Activated CD8-positive, alpha-beta T cell treated with anti-CD3 and anti-CD28 coated beads for 36 hours (primary cell): ENCODE measurements at regions of chr4 and their contacts with region 1.

Region 1: GRCh38 chr4:122577808-122578781 is 42.8 kb downstream of the IL21 start:
- DNase-seq: peak; percentile 84
- ATAC-seq: peak; percentile 69
- H3K4me3 Mint-ChIP-seq: peak overlapping the region; percentile 70
- H3K27ac Mint-ChIP-seq: peak overlapping the region; percentile 91
- H3K4me1 Mint-ChIP-seq: peaks cover 33% of the 10 kb centered on the region
- H3K27me3 Mint-ChIP-seq: peaks cover 6% of the 10 kb centered on the region
- CTCF ChIP-seq: peak; percentile 72

Region 2: DNA sequence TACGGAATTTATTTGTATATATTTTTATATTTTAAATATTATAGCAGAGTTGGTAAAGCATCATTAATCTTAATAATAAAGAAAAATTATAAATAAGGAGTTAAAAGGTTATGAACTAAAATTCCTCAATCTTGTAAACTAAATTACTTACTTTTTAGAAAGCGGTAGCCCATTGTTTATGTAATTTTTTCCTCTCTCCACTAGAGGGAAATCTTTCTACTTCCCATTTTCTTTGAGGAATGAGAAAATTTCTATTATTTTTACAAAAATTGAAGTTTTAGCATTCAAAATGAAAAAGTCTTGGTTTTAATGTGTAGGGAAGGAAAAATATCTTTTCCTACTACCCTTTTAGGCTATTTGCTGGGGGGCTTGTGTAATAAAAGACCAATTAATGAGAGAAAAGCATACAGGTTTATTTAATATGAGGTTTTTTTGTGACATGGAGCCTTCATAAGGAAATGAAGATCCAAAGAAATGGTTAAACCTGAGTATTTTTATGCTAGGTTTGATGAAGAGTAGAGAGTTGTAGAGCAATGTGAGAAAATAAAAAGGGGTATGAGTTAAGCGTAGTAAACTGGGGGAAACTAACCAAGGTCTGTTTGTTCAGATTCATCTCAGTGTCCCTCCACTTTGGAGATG is 268.0 kb before region 1 on chr4:
- CTCF ChIA-PET with region 1: interaction called, 14 read pairs
- POLR2A ChIA-PET with region 1: no interaction called
- intact Hi-C with region 1: loop called (anchors 5 kb)
- DNase-seq: no peak
- ATAC-seq: no peak
- H3K4me3 Mint-ChIP-seq: no peak overlapping the region
- H3K27ac Mint-ChIP-seq: no peak overlapping the region
- H3K4me1 Mint-ChIP-seq: no peaks in the 10 kb centered on the region
- H3K27me3 Mint-ChIP-seq: no peaks in the 10 kb centered on the region
- CTCF ChIP-seq: peak; percentile 65

Region 3: GRCh38 chr4:122458625-122459024 is 119.5 kb before region 1 on chr4:
- CTCF ChIA-PET with region 1: interaction called, 20 read pairs
- POLR2A ChIA-PET with region 1: no interaction called
- intact Hi-C with region 1: loop called (anchors 2 kb)
- DNase-seq: peak; percentile 70
- ATAC-seq: peak; percentile 85
- H3K4me3 Mint-ChIP-seq: peak overlapping the region; percentile 69
- H3K27ac Mint-ChIP-seq: peak overlapping the region; percentile 85
- H3K4me1 Mint-ChIP-seq: peaks cover 48% of the 10 kb centered on the region
- H3K27me3 Mint-ChIP-seq: no peaks in the 10 kb centered on the region
- CTCF ChIP-seq: no peak

Region 4: DNA sequence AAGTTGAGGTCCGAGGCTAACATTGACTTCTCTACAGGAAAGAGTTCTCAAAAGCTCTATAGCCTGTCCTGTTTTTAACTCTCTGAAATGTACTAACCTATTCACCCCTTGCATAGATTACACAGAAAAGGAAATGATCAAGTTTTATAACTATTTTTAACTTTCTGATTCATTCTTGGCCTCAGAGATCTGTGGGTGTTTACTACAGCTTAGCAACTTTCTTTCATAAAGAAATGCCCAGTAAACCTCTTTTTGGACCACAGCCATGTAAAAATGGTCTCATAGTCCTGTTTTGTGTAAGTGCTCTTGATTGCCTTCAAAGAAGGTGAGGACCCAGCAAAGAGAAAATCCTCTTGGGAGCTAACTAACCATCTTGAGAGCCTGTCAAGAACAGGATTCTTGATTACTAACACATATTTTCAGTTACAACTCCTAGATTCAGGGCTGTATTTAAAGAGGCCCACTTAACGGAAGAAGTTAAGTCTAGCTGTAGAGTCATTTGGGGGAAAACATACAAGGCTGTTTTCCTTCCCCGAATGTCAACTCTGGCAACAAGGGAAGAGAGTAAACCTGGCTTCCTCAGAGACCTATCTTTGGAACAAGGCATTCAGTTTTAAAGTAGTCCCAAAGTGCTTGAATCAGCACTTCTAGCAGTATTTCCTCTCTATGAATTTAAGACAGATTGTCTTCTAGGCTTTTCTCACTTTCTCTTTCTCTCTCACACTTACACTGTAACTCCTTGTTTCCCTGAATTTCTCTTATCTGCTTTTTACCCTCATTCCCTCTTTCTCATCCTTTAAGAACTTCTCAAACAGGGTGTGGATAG is 35.5 kb before region 1 on chr4:
- CTCF ChIA-PET with region 1: interaction called, 14 read pairs
- POLR2A ChIA-PET with region 1: interaction called, 4 read pairs
- intact Hi-C with region 1: loop called (anchors 5 kb)
- DNase-seq: no peak
- ATAC-seq: peak; percentile 67
- H3K4me3 Mint-ChIP-seq: peak overlapping the region; percentile 40
- H3K27ac Mint-ChIP-seq: peak overlapping the region; percentile 93
- H3K4me1 Mint-ChIP-seq: peaks cover 64% of the 10 kb centered on the region
- H3K27me3 Mint-ChIP-seq: no peaks in the 10 kb centered on the region
- CTCF ChIP-seq: no peak

Region 5: DNA sequence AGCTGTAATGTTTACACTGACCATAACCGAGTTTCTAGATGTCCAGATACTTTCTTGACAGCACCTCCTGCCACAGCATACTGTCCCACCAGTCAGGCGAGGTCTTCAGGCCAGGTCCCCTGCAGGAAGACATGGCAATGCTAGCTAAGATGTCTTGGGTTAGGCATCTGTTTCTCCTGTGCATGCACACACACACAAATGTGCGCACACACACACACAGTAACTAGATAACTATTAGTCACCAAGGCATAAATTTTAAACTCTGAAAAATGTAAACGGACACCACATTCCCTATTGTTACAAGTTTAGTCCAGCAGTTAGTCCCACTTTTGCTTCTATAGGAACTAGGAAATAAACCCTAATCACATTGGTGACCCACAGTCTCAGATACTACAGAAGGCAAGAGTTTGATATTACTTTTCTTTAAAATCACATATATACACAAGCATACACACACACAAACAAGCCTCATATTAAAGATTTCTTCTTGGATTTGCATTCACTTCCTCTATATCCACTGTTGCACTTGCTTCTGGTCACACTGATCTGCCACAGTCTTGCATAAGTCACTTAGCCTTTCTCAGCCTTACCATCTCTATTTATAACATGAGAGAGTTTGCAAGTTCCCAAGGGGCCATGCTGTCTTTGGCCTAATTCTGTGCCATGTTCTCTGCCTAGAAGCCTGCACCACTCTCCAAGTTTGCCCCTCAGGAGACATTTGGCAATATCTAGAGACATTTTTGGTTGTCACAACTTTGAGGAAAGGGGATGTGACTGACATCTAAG is 10.6 kb after region 1 on chr4:
- CTCF ChIA-PET with region 1: interaction called, 14 read pairs
- POLR2A ChIA-PET with region 1: no interaction called
- intact Hi-C with region 1: no loop called
- DNase-seq: no peak
- ATAC-seq: no peak
- H3K4me3 Mint-ChIP-seq: no peak overlapping the region
- H3K27ac Mint-ChIP-seq: no peak overlapping the region
- H3K4me1 Mint-ChIP-seq: peaks cover 20% of the 10 kb centered on the region
- H3K27me3 Mint-ChIP-seq: no peaks in the 10 kb centered on the region
- CTCF ChIP-seq: no peak

Region 6: DNA sequence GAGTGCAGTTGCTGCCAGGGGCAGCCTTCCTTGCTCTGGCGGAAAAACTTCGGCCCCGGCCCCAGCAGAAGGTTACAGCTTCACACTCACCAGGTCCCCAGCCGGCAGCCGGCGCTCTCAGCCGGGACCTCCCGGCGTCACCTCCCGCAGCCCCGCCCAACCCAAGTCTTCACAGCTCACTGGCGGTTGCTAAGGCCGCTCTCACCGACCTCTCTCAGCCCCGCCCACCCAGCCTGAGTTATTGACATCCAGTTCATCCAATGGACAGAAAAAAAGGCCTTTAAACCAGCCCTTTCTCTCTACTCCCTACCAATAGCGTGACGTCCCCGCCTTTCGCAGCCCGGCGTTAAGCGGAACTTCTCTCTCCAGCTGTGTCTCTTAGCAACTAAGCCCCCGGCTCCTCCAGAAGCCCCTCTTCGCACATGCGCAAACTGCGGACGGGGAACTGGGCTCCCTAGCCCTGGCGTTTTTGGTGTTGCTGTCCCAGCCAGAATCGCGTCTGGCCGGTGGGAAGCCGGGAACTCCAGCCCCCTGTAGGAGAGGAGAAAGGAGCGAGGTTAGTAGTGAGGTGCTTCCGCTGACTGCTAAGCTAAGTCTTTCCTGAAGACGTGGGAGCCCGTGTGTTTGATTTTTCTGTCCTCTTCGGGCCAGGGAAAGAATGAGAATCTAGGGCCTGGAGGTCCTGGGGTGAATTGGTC is 154.4 kb after region 1 on chr4 and contains the start of gene BBS12:
- CTCF ChIA-PET with region 1: interaction called, 10 read pairs
- POLR2A ChIA-PET with region 1: no interaction called
- intact Hi-C with region 1: no loop called
- DNase-seq: peak; percentile 99
- ATAC-seq: peak; percentile 99
- H3K4me3 Mint-ChIP-seq: peak within 1 kb of the TSS; percentile 94
- H3K27ac Mint-ChIP-seq: peak within 1 kb of the TSS; percentile 91
- H3K4me1 Mint-ChIP-seq: peaks cover 11% of the 10 kb centered on the region
- H3K27me3 Mint-ChIP-seq: no peaks in the 10 kb centered on the region
- CTCF ChIP-seq: no peak
- total RNA-seq, gene BBS12: 0.74 to 0.89 TPM